Mucosa of descending colon (tissue), 3 donors: ENCODE measurements at regions of chr9 and their contacts with region 1.

Region 1: DNA sequence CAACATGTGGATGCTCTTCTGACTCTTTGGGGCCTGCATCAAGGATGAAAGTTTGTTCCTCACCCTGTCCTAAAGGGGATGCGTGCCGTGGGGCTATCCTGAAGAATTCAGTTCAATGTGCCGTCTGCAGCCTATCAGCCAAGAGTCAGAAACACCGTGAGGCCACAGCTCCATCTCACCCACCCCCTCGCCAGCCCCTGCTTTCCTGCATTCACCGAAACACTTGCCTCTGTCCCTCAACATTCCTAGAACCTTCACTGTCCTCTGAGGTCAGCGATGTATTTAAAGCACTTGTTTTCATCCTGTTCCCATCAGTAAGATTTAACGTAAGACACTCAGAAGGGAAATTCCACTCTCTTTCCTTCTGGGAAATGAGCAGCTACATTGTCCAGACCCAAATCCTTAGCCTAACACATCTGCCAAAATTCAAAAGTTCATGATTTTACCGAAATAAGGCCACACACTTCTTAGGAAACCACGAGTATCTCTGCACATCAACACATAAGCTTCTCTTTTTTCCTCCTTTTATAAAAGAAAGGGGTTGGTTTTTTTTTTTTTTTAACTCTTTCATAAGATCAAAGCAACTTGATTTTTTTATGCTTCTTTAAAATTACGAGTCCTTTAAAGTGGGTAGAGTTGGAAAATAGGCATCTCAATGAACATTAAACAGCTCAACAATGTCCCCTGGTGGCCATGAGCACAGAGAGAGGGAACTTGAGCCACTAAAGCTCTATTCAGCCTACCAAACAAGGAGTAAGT is 100.7 kb downstream of the SUSD1 start:
- DNase-seq: peak in 1 of 3 donors; percentile 90
- ATAC-seq: peak; percentile 86
- H3K4me3 ChIP-seq: no peak overlapping the region
- H3K4me1 ChIP-seq: peaks cover 14% of the 10 kb centered on the region
- CTCF ChIP-seq: peak; percentile 55

Region 2: GRCh38 chr9:111759762-111760639 is 314.4 kb before region 1 on chr9:
- intact Hi-C with region 1: loop called (anchors 2 to 5 kb)
- DNase-seq: peak in 1 of 3 donors; percentile 80
- ATAC-seq: peak; percentile 94
- H3K4me3 ChIP-seq: no peak overlapping the region
- H3K4me1 ChIP-seq: no peaks in the 10 kb centered on the region
- CTCF ChIP-seq: peak; percentile 32

Region 3: DNA sequence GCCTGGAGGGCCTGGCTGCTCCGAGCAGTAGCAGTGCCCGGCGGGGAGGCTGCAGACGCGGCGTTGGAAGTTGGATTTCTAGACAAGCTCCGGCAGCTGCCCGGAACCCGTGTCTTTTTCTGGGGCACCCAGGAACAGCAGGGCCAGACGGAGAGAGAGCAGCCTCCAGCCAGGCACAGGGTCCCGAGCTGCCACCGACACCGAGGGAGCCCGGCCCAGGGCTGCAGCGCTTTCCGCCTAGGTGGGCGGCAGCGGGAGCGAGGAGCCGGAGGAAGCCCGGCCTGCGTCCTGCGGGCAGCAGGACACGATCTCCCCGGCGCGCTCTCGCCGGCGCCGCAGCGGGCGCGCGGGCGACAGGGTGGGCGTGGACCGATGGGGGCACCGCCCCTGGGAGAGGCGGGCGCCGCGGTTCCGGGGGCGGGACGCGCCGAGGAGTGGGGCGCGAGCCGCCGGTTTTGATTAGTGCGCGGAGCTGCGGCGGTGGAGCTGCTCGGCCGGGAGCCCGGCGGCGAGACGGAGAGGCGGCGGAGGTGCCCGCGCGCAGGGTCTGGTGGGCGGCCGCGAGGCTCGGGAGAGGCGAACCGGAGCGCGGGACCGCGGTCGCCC is 178.0 kb before region 1 on chr9 and contains the start of gene UGCG:
- intact Hi-C with region 1: loop called in 1 of 2 experiments (anchors 10 kb)
- DNase-seq: peak; percentile 91 to 95 (median 93)
- ATAC-seq: peak; percentile 93
- H3K4me3 ChIP-seq: peak within 1 kb of the TSS; percentile 65
- H3K4me1 ChIP-seq: peaks cover 22% of the 10 kb centered on the region
- CTCF ChIP-seq: no peak
- total RNA-seq, gene UGCG: 36.5 to 48.2 (median 39.8) TPM

Region 4: GRCh38 chr9:112315331-112316257 is 241.2 kb after region 1 on chr9:
- intact Hi-C with region 1: no loop called
- DNase-seq: no peak
- ATAC-seq: peak; percentile 24
- H3K4me3 ChIP-seq: no peak overlapping the region
- H3K4me1 ChIP-seq: peaks cover 5% of the 10 kb centered on the region
- CTCF ChIP-seq: no peak